Astrocyte of the cerebellum (primary cell): ENCODE measurements at regions of chr11 and their contacts with region 1.

Region 1: GRCh38 chr11:114179234-114179941 is 116.8 kb upstream of the NNMT start:
- DNase-seq: peak; percentile 49
- H3K4me3 ChIP-seq: no peak overlapping the region
- CTCF ChIP-seq: no peak

Region 2: GRCh38 chr11:114060392-114061350 is 118.7 kb before region 1 on chr11:
- in situ Hi-C with region 1: loop called (anchors 10 kb)
- DNase-seq: no peak
- H3K4me3 ChIP-seq: peak overlapping the region; percentile 85
- CTCF ChIP-seq: no peak

Region 3: GRCh38 chr11:114091516-114092397 is 87.6 kb before region 1 on chr11:
- in situ Hi-C with region 1: no loop called
- DNase-seq: no peak
- H3K4me3 ChIP-seq: no peak overlapping the region
- CTCF ChIP-seq: no peak